ENCODE measurements at regions of chr11 and their contacts with region 1.

Region 1: DNA sequence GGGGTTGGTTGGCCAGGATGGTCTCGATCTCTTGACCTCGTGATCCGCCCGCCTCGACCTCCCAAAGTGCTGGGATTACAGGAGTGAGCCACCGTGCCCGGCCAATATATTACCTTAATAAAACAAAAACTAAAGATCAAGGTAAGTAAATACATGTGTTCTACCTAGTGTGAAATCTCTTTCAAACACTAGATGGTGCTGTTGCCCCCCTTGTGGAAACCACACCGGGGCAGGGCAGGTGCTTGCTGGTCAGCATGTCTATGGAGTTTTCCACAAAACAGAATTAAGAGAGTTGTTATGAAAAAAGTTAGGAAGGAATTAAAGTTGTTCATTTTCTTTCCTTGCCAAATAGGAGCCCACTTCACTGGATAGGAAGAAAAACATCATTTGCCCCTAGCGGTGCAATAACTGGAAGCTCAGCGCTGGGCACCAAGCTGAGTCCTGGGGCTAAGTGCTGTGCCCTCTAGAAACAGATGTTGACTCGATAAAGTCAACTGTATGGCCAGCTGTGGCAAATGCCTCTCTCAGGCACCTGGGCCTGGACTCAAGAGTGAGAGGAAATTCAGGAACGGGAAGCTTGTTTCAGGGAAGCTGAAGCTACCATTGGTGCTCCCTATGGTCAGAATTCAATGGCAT is 6.3 kb upstream of the KCNJ5 start:
- DNase-seq: peak in 3 of 5 donors; percentile 45 to 57 (median 53)
- ATAC-seq: peak; percentile 55 to 88 (median 80)
- H3K4me3 ChIP-seq: no peak overlapping the region
- H3K27ac ChIP-seq: no peak overlapping the region
- H3K4me1 ChIP-seq: no peaks in the 10 kb centered on the region
- H3K27me3 ChIP-seq: peaks cover 0 to 30% (median 2%) of the 10 kb centered on the region in 9 donors
- CTCF ChIP-seq: peak; percentile 76 to 94 (median 86)
- POLR2A ChIP-seq: no peak

Region 2: GRCh38 chr11:128039140-128040021 is 845.4 kb before region 1 on chr11:
- intact Hi-C with region 1: loop called in 1 of 10 experiments (anchors 10 kb)
- DNase-seq: peak in 4 of 5 donors; percentile 23 to 74 (median 32)
- ATAC-seq: peak in 3 of 4 donors; percentile 66 to 92 (median 78)
- H3K4me3 ChIP-seq: peak overlapping the region in 1 of 12 donors; percentile 19
- H3K27ac ChIP-seq: peak overlapping the region in 1 of 12 donors; percentile 72
- H3K4me1 ChIP-seq: peaks cover 0 to 39% (median 0%) of the 10 kb centered on the region in 12 donors
- H3K27me3 ChIP-seq: peaks cover 0 to 15% (median 0%) of the 10 kb centered on the region in 9 donors
- CTCF ChIP-seq: peak in 2 of 12 donors; percentile 7 to 16
- POLR2A ChIP-seq: no peak

Region 3: GRCh38 chr11:128905345-128906184 is 20.7 kb after region 1 on chr11:
- intact Hi-C with region 1: loop called in 2 of 10 experiments (anchors 1 to 2 kb)
- DNase-seq: peak in 3 of 5 donors; percentile 50 to 71 (median 64)
- ATAC-seq: peak; percentile 44 to 74 (median 60)
- H3K4me3 ChIP-seq: peak overlapping the region; percentile 45 to 73 (median 62)
- H3K27ac ChIP-seq: peak overlapping the region in 11 of 12 donors; percentile 61 to 88 (median 69)
- H3K4me1 ChIP-seq: peaks cover 0 to 65% (median 24%) of the 10 kb centered on the region in 12 donors
- H3K27me3 ChIP-seq: peaks cover 0 to 3% (median 0%) of the 10 kb centered on the region in 9 donors
- CTCF ChIP-seq: peak; percentile 17 to 63 (median 43)
- POLR2A ChIP-seq: no peak

Region 4: DNA sequence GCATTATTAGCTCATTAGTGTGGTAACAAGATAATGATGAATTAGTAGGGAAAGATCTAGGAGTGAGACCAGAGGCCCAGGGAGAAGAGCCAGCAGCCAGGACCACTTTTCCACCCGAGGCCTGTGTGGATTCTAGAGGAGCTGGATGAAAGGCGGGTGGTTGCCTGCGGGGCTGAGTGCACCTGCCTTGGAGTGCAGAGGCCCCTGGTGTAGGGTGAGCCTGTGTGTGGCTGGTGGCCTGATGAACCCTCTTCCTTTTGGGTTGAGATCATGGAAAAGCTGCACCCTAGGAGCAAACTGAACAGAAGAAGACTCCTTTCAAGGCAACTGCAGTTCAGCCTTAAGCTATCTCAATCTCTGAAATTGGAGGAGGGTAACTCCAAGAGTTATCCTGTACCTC is 63.8 kb after region 1 on chr11:
- intact Hi-C with region 1: loop called in 2 of 10 experiments (anchors 2 kb)
- DNase-seq: no peak
- ATAC-seq: peak in 3 of 4 donors; percentile 63 to 68 (median 63)
- H3K4me3 ChIP-seq: no peak overlapping the region
- H3K27ac ChIP-seq: no peak overlapping the region
- H3K4me1 ChIP-seq: no peaks in the 10 kb centered on the region
- H3K27me3 ChIP-seq: no peaks in the 10 kb centered on the region
- CTCF ChIP-seq: peak in 10 of 12 donors; percentile 9 to 40 (median 28)
- POLR2A ChIP-seq: no peak

Region 5: DNA sequence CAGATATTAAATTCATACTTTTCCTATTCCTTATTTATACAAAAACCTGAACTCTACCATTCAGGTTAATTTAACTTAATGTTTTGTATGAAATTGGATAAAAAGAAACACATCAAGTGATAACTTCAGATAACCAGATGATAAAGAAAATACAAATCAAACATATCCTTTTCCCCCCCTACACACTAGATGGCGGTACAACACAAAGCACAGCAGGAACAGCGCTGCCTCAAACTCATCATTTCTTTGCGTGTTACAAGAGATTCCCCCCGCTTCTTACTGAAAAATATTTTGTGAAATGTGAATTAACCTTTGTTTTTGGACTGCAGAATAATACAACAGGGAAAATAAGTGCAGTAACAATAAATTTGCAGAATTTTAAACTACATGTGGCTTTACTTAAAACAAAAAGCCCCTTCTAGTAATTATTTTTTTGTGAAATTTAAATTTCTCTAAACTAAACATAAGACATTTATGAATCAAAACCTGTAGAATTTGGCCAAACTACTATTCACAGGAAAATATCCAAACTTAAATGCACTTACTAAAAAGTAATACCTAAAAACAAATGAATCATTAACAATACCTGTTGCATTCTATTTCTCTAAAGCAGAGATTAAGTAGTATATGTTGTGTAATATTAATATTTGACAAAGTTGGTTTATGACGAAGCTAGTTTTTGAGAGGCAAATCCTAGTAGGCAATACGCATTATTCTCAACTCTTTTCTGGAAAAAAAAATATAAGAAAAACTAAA is 233.0 kb after region 1 on chr11:
- intact Hi-C with region 1: loop called in 1 of 10 experiments (anchors 10 kb)
- DNase-seq: peak in 1 of 5 donors; percentile 27
- ATAC-seq: peak in 2 of 4 donors; percentile 59 to 61
- H3K4me3 ChIP-seq: no peak overlapping the region
- H3K27ac ChIP-seq: no peak overlapping the region
- H3K4me1 ChIP-seq: peaks cover 0 to 3% (median 0%) of the 10 kb centered on the region in 12 donors
- H3K27me3 ChIP-seq: no peaks in the 10 kb centered on the region
- CTCF ChIP-seq: peak; percentile 79 to 94 (median 86)
- POLR2A ChIP-seq: no peak

Region 6: GRCh38 chr11:129331871-129332274 is 447.1 kb after region 1 on chr11:
- intact Hi-C with region 1: loop called in 2 of 10 experiments (anchors 5 to 10 kb)
- DNase-seq: peak; percentile 72 to 85 (median 80)
- ATAC-seq: peak; percentile 61 to 98 (median 90)
- H3K4me3 ChIP-seq: no peak overlapping the region
- H3K27ac ChIP-seq: no peak overlapping the region
- H3K4me1 ChIP-seq: peaks cover 0 to 4% (median 0%) of the 10 kb centered on the region in 12 donors
- H3K27me3 ChIP-seq: no peaks in the 10 kb centered on the region
- CTCF ChIP-seq: peak; percentile 67 to 94 (median 87)
- POLR2A ChIP-seq: no peak